Natural killer cell (primary cell): ENCODE measurements at regions of chr2 and their contacts with region 1.

Region 1: DNA sequence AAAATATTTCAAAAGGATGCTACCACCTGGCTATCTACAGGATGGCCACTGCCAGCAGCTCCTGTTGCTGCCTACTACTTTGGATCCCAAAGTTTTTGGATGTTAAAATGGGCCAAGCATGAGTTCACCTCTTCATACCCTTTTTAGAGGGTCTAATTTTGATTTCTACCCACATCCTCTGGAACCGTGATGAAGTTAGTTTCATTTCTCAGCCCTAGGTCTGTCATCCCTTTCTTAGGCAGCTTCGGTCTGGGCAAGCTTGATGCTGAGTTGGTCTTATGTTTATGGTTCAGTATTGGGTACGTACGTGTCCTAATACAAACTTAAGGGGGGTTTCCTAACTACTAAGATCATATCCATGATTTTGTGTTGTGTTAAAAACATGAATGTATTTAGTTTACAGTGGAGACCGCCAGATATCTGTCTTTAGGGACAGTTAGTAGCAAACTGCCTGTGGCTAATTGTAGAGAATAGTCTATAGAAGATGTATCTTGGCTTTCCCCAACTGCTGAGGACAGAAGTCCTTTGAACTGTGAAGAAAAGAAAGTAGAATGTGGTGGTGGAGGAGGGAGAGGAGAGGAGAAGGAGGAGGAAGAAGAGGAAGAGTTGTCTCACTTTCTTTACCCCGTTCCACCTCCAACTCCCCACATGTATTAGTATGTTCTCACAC is 184.9 kb downstream of the UBE2E3 start:
- DNase-seq: peak in 1 of 2 donors; percentile 72
- ATAC-seq: peak; percentile 76 to 85 (median 79)
- H3K4me3 ChIP-seq: no peak overlapping the region
- H3K4me3 Mint-ChIP-seq: peak overlapping the region; percentile 66
- H3K27ac ChIP-seq: peak overlapping the region; percentile 89
- H3K27ac Mint-ChIP-seq: peak overlapping the region; percentile 95 to 96
- H3K4me1 ChIP-seq: peaks cover 28% of the 10 kb centered on the region
- H3K4me1 Mint-ChIP-seq: peaks cover 57 to 61% of the 10 kb centered on the region in 2 donors
- H3K27me3 ChIP-seq: no peaks in the 10 kb centered on the region
- H3K27me3 Mint-ChIP-seq: no peaks in the 10 kb centered on the region
- CTCF ChIP-seq: no peak

Region 2: GRCh38 chr2:181104512-181105115 is 60.7 kb before region 1 on chr2:
- intact Hi-C with region 1: loop called (anchors 10 kb)
- DNase-seq: peak in 1 of 2 donors; percentile 81
- ATAC-seq: peak in 2 of 3 donors; percentile 66 to 75
- H3K4me3 ChIP-seq: no peak overlapping the region
- H3K4me3 Mint-ChIP-seq: no peak overlapping the region
- H3K27ac ChIP-seq: peak overlapping the region; percentile 29
- H3K27ac Mint-ChIP-seq: peak overlapping the region in 1 of 2 donors; percentile 6
- H3K4me1 ChIP-seq: peaks cover 6% of the 10 kb centered on the region
- H3K4me1 Mint-ChIP-seq: peaks cover 25 to 27% of the 10 kb centered on the region in 2 donors
- H3K27me3 ChIP-seq: no peaks in the 10 kb centered on the region
- H3K27me3 Mint-ChIP-seq: peaks cover 0 to 3% of the 10 kb centered on the region in 2 donors
- CTCF ChIP-seq: peak; percentile 89

Region 3: GRCh38 chr2:181146171-181146570 is 19.2 kb before region 1 on chr2:
- intact Hi-C with region 1: loop called (anchors 1 kb)
- DNase-seq: peak in 1 of 2 donors; percentile 61
- ATAC-seq: peak; percentile 75 to 90 (median 83)
- H3K4me3 ChIP-seq: no peak overlapping the region
- H3K4me3 Mint-ChIP-seq: peak overlapping the region; percentile 75
- H3K27ac ChIP-seq: peak overlapping the region; percentile 78
- H3K27ac Mint-ChIP-seq: peak overlapping the region; percentile 89 to 90
- H3K4me1 ChIP-seq: peaks cover 29% of the 10 kb centered on the region
- H3K4me1 Mint-ChIP-seq: peaks cover 64 to 66% of the 10 kb centered on the region in 2 donors
- H3K27me3 ChIP-seq: no peaks in the 10 kb centered on the region
- H3K27me3 Mint-ChIP-seq: no peaks in the 10 kb centered on the region
- CTCF ChIP-seq: no peak

Region 4: GRCh38 chr2:181223234-181223633 is 57.9 kb after region 1 on chr2:
- intact Hi-C with region 1: no loop called
- DNase-seq: peak in 1 of 2 donors; percentile 24
- ATAC-seq: no peak
- H3K4me3 ChIP-seq: no peak overlapping the region
- H3K4me3 Mint-ChIP-seq: peak overlapping the region; percentile 8
- H3K27ac ChIP-seq: peak overlapping the region; percentile 3
- H3K27ac Mint-ChIP-seq: peak overlapping the region; percentile 30 to 72
- H3K4me1 ChIP-seq: no peaks in the 10 kb centered on the region
- H3K4me1 Mint-ChIP-seq: peaks cover 24 to 26% of the 10 kb centered on the region in 2 donors
- H3K27me3 ChIP-seq: no peaks in the 10 kb centered on the region
- H3K27me3 Mint-ChIP-seq: no peaks in the 10 kb centered on the region
- CTCF ChIP-seq: no peak

Region 5: DNA sequence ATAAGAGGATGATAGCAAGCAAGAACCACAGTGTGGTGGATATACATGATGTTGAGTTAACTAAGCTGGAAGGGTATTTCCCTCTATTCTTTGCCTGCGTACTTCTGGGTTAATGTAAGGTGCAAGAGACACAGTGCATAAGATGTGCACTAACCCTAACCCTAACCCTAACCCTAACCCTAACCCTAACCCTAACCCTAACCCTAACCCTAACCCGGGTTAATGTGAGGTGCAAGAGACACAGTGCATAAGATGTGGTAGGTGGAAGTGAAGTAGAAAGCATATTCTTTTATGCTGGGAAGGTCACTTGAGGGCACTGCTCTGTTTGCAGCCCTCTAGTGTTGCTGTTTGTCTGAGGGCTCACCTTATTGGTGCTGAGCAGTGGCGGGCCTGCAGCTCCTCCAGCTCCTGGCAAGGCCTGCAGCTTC is 110.3 kb after region 1 on chr2:
- intact Hi-C with region 1: loop called (anchors 10 kb)
- DNase-seq: peak in 1 of 2 donors; percentile 67
- ATAC-seq: peak; percentile 82 to 90 (median 83)
- H3K4me3 ChIP-seq: no peak overlapping the region
- H3K4me3 Mint-ChIP-seq: no peak overlapping the region
- H3K27ac ChIP-seq: peak overlapping the region; percentile 24
- H3K27ac Mint-ChIP-seq: peak overlapping the region; percentile 78 to 83
- H3K4me1 ChIP-seq: peaks cover 6% of the 10 kb centered on the region
- H3K4me1 Mint-ChIP-seq: peaks cover 26 to 37% of the 10 kb centered on the region in 2 donors
- H3K27me3 ChIP-seq: no peaks in the 10 kb centered on the region
- H3K27me3 Mint-ChIP-seq: no peaks in the 10 kb centered on the region
- CTCF ChIP-seq: no peak

Region 6: DNA sequence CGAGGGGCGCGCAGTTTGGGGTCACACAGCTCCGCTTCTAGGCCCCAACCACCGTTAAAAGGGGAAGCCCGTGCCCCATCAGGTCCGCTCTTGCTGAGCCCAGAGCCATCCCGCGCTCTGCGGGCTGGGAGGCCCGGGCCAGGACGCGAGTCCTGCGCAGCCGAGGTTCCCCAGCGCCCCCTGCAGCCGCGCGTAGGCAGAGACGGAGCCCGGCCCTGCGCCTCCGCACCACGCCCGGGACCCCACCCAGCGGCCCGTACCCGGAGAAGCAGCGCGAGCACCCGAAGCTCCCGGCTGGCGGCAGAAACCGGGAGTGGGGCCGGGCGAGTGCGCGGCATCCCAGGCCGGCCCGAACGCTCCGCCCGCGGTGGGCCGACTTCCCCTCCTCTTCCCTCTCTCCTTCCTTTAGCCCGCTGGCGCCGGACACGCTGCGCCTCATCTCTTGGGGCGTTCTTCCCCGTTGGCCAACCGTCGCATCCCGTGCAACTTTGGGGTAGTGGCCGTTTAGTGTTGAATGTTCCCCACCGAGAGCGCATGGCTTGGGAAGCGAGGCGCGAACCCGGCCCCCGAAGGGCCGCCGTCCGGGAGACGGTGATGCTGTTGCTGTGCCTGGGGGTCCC is 291.9 kb after region 1 on chr2 and contains the start of gene ITGA4:
- intact Hi-C with region 1: loop called (anchors 5 kb)
- DNase-seq: peak; percentile 81 to 93
- ATAC-seq: peak; percentile 69 to 89 (median 79)
- H3K4me3 ChIP-seq: peak within 1 kb of the TSS; percentile 84
- H3K4me3 Mint-ChIP-seq: peak within 1 kb of the TSS; percentile 98
- H3K27ac ChIP-seq: peak within 1 kb of the TSS; percentile 99
- H3K27ac Mint-ChIP-seq: peak within 1 kb of the TSS; percentile 79 to 84
- H3K4me1 ChIP-seq: peaks cover 17% of the 10 kb centered on the region
- H3K4me1 Mint-ChIP-seq: peaks cover 59 to 67% of the 10 kb centered on the region in 2 donors
- H3K27me3 ChIP-seq: no peaks in the 10 kb centered on the region
- H3K27me3 Mint-ChIP-seq: no peaks in the 10 kb centered on the region
- CTCF ChIP-seq: peak; percentile 82
- total RNA-seq, gene ITGA4: 178 to 235 (median 189) TPM

Region 7: DNA sequence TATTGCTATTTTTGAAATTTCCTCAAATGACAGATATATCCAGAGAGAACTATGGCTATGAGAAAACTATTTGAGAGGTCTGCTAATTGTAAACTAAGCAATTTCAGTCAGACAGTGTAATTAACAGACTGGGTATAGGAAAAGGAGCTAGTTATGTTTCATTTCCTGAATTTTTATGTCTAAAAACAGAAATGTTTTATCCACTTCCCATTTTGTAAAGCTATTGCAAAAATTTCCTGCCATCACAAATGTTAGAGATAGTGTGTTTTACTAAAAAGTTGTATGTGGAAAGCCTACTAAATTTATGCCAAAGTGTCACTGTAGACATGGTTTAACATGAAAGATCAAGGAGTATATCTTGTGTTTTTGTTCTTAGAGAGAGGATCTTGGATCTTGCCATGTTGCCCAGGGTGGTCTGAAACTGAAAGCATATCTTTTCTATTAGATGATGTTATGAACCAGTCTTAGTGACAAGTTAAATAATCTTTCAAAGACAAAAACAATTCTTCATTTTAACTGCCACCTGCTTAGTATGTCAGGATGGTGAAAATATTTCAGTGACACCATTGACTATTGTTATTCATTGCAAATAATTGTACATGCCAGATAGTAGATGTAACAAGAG is 685.7 kb after region 1 on chr2:
- intact Hi-C with region 1: no loop called
- DNase-seq: no peak
- ATAC-seq: no peak
- H3K4me3 ChIP-seq: no peak overlapping the region
- H3K4me3 Mint-ChIP-seq: no peak overlapping the region
- H3K27ac ChIP-seq: no peak overlapping the region
- H3K27ac Mint-ChIP-seq: no peak overlapping the region
- H3K4me1 ChIP-seq: no peaks in the 10 kb centered on the region
- H3K4me1 Mint-ChIP-seq: no peaks in the 10 kb centered on the region
- H3K27me3 ChIP-seq: no peaks in the 10 kb centered on the region
- H3K27me3 Mint-ChIP-seq: no peaks in the 10 kb centered on the region
- CTCF ChIP-seq: no peak